H1 (cell line): ENCODE measurements at regions of chr2 and their contacts with region 1.

Region 1: DNA sequence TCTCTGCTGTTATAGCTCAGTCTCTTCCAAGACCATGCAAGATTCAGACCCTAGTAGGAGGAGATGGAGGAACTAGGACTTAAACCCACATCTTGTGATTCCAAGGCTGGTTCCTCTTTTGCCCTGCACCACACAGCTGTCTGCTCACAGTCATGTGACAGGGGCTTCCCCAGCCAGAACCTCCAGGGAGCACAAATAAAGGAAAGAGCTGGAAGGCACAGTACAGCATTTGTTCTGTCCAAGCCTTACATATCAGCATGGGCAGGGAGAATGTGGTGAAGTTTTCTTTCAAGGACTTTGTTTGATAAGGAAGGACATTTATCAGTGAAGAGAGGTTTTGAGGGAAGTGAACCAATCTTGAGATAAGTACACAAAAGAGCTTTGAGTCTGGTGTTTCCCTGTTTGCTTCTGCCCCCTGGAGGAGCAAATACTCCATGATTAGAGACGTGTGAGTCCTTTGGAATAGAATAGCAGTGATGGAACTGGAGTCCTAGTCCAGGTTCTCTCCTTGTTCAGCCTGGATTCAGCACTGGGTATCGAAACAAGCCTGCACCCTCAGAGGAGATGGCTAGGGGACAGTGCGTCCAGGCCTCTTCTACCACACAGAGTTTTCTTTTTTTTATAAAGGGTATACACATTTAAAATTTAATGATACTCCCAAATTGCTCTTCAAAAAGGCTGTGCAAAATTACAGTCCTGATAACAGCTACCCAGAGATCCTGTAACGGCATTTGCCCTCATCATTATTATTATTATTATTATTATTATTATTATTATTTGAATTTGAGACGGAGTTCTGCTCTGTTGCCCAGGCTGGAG is 24.6 kb upstream of the CASP10 start:
- DNase-seq: peak in 1 of 2 experiments; percentile 55
- H3K4me3 ChIP-seq: no peak overlapping the region
- H3K27ac ChIP-seq: peak overlapping the region; percentile 31; the same call in 1 of the 2 replicates
- H3K4me1 ChIP-seq: peaks cover 0 to 6% (median 3%) of the 10 kb centered on the region in 4 experiments; a peak in 1 of 7 replicates
- H3K27me3 ChIP-seq: no peaks in the 10 kb centered on the region
- CTCF ChIP-seq: peak in 2 of 3 experiments; percentile 64 to 76; a peak in 3 of 4 replicates
- EP300 ChIP-seq: no peak
- POLR2A ChIP-seq: 0 out of 3 replicates have a peak, but pooled peaks of 1 of the 2 experiments have one; percentile 26
- RAD21 ChIP-seq: peak; percentile 84 to 89

Region 2: DNA sequence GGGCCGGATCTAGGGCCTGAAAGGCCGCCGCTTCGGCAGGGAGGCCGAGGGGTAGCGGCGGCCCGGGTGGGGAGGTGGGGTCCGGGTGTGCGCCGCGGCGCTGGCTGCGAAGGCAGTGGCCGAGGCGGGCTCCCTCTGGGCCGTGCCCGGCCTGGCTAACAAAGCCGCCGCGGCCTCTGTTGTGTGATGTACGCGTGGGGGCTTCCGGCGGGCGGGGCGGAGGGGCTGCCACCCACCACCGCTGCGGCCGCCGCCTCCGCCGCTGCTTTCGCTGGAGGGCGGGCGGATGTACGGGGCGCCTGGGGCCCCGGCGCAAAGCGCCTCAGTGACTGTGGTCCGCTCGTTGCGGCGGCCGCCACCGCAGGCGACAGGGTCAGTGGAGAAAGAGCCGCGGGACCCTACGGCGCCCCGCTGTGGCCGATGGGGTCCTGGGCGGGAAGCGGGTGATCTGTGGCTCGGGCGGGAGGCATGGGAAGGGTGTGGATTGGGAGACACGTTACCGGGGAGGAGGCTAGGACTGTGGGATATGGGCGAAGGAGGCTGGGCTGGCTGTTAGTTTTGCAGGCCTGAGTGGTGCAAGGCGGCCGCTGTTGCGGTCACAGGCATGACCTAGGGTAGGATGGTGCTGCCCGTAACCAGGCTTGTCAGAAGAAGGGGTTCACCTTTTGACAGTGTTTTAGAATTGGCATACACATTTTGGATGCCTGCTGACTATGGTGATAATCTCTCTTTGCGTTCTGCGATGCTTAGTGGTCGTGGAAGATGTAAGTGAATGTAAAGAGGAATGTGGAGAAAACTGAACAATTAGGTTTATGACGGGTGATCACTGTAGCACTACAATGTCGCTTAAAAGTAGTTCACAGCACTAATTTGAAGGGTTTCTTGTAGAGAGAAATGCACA is 345.9 kb before region 1 on chr2:
- CTCF ChIA-PET with region 1: no interaction called
- POLR2A ChIA-PET with region 1: no interaction called
- DNase-seq: peak in 1 of 2 experiments; percentile 71
- H3K4me3 ChIP-seq: peak overlapping the region; percentile 86 to 99 (median 96)
- H3K27ac ChIP-seq: peak overlapping the region; percentile 100
- H3K4me1 ChIP-seq: peaks cover 2 to 9% (median 5%) of the 10 kb centered on the region in 4 experiments; a peak in 6 of 7 replicates
- H3K27me3 ChIP-seq: no peaks in the 10 kb centered on the region
- CTCF ChIP-seq: peak in 1 of 3 experiments; percentile 13; a peak in 1 of 4 replicates
- EP300 ChIP-seq: no peak
- POLR2A ChIP-seq: no peak
- RAD21 ChIP-seq: peak in 1 of 2 experiments; percentile 26; a peak in 1 of 4 replicates

Region 3: DNA sequence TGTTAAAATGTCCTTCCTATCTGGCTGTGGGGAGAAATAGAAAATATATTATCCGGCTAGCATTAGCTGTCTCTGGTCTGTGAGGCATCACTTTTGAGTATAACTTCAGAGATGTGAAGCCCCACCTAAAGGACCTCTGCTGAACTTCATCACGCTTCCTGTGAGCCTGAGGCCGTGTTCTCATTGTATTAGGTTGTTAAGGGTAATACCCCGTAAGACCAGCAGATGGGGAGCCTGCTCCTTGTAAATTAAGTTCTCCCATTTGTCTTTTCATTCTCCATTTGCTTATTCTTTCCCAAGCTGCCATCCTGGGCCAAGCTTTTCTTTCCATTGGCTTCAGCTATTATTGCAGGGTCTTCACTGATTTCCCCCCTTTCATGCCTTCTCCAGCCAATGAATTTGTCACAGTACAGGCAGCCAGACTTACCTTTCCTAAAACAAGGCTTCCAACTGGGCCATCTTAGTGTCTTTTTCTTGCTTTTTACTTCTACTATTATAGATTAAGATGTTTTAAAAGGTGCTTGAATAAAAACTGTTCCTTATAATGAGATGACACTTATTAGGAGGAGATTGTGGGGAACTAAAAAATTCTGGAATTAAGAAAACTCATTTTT is 256.8 kb before region 1 on chr2:
- CTCF ChIA-PET with region 1: interaction called, 12 read pairs
- POLR2A ChIA-PET with region 1: no interaction called
- DNase-seq: peak; percentile 50 to 62
- H3K4me3 ChIP-seq: no peak overlapping the region
- H3K27ac ChIP-seq: no peak overlapping the region
- H3K4me1 ChIP-seq: no peaks in the 10 kb centered on the region
- H3K27me3 ChIP-seq: no peaks in the 10 kb centered on the region
- CTCF ChIP-seq: peak in 2 of 3 experiments; percentile 84 to 89; a peak in 3 of 4 replicates
- EP300 ChIP-seq: no peak
- POLR2A ChIP-seq: no peak
- RAD21 ChIP-seq: peak; percentile 72 to 81

Region 4: DNA sequence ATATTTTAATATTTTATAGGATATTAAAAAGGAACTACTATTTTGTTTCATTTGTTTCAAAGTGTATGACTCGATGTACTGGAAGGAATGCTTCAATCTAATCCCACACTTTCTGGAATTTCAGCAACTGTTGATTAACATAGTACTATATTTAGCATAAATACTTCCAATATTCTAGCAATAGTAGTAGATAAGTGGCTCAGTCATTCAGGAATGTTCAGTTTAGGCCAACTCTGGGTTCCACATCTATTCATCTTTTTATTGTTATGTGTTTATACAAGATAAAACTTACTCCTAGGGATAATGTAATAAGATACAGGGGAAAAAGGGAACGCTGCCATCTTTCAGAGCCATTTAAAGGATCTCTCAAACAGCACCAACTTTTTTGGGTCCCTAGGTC is 172.5 kb before region 1 on chr2:
- CTCF ChIA-PET with region 1: interaction called, 13 read pairs
- POLR2A ChIA-PET with region 1: no interaction called
- DNase-seq: no peak
- H3K4me3 ChIP-seq: no peak overlapping the region
- H3K27ac ChIP-seq: no peak overlapping the region
- H3K4me1 ChIP-seq: peaks cover 0 to 6% (median 0%) of the 10 kb centered on the region in 4 experiments; a peak in 4 of 7 replicates
- H3K27me3 ChIP-seq: no peaks in the 10 kb centered on the region
- CTCF ChIP-seq: no peak
- EP300 ChIP-seq: no peak
- POLR2A ChIP-seq: no peak
- RAD21 ChIP-seq: no peak

Region 5: GRCh38 chr2:201109186-201109585 is 49.1 kb before region 1 on chr2:
- CTCF ChIA-PET with region 1: interaction called, 10 read pairs
- POLR2A ChIA-PET with region 1: no interaction called
- DNase-seq: no peak
- H3K4me3 ChIP-seq: no peak overlapping the region
- H3K27ac ChIP-seq: no peak overlapping the region
- H3K4me1 ChIP-seq: no peaks in the 10 kb centered on the region
- H3K27me3 ChIP-seq: no peaks in the 10 kb centered on the region
- CTCF ChIP-seq: no peak
- EP300 ChIP-seq: no peak
- POLR2A ChIP-seq: no peak
- RAD21 ChIP-seq: no peak

Region 6: DNA sequence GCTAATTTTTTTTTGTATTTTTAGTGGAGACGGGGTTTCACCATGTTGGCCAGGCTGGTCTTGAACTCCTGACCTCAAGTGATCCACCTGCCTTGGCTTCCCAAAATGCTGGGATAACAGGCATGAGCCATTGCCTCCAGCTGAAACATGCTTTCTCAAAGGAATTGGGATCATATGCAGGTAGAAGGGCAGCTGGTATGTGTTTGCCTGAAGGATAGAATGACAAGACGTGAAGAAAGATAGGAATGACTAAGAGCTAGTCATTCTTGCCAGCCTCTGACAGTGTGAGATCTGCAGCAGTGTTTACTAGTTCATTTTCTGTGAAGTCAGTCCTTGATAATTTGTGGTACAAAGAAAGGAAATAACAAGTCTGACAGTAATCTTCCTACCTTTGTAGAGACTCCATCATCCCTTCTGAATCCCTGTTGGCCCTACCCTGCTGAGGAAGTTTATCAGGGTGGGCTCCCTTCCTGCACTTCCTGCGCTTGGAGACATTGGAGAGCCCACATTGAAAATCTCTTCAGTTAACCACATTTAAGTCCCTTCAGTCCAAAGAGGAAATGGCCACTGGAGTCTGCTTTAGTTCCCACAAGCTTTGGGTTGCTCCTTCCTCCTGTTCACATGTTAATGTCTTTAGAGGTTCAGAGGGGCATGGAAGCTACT is 27.7 kb before region 1 on chr2:
- CTCF ChIA-PET with region 1: interaction called, 11 read pairs
- POLR2A ChIA-PET with region 1: interaction called, 4 read pairs
- DNase-seq: no peak
- H3K4me3 ChIP-seq: no peak overlapping the region
- H3K27ac ChIP-seq: no peak overlapping the region
- H3K4me1 ChIP-seq: peaks cover 0 to 3% (median under 1%) of the 10 kb centered on the region in 4 experiments; a peak in 3 of 7 replicates
- H3K27me3 ChIP-seq: no peaks in the 10 kb centered on the region
- CTCF ChIP-seq: no peak
- EP300 ChIP-seq: no peak
- POLR2A ChIP-seq: no peak
- RAD21 ChIP-seq: no peak

Region 7: DNA sequence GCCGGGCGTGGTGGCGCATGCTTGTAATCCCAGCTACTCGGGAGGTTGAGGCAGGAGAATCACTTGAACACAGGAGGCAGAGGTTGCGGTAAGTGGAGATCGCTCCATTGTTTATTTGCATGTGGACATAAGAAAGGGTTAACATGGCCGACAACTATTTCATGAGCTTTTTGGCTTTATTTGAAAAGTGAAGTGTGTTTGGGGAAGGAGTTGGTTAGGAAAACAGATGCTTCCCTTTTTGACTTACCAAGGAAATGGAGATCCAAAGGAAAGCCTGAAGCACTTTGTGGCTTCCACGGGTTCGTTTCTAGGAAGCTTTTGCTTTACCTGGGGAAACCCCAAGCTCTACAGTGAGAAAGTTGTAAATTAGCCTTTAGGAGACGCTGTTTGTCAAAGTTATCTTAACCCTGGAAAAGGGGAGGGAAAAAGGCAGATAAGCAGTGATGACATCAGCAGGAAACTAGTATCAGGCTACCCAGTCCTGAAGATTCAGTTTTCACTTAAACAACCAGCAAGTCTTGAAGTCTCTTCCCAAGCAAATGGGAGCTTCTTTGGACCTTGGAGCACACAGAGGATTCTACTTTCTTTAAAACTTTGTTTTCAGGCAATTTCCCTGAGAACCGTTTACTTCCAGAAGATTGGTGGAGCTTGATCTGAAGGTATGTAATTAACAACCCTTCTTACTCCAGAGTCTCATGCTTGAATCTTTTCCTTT is 24.5 kb after region 1 on chr2 and contains the start of gene CASP10:
- CTCF ChIA-PET with region 1: interaction called, 10 read pairs
- POLR2A ChIA-PET with region 1: no interaction called
- DNase-seq: no peak
- H3K4me3 ChIP-seq: peak within 1 kb of the TSS in 3 of 4 experiments; percentile 5 to 47 (median 17); a peak in 4 of 8 replicates
- H3K27ac ChIP-seq: peak within 1 kb of the TSS; percentile 46; the same call in 1 of the 2 replicates
- H3K4me1 ChIP-seq: no peaks in the 10 kb centered on the region
- H3K27me3 ChIP-seq: no peaks in the 10 kb centered on the region
- CTCF ChIP-seq: peak in 2 of 3 experiments; percentile 43 to 60; a peak in 3 of 4 replicates
- EP300 ChIP-seq: no peak
- POLR2A ChIP-seq: peak in 1 of 2 experiments; percentile 58; a peak in 1 of 3 replicates
- RAD21 ChIP-seq: peak; percentile 63 to 71
- total RNA-seq, gene CASP10: 4.0 and 4.2 TPM in 2 replicates